Natural killer cell (primary cell): ENCODE measurements at regions of chr3 and their contacts with region 1.

Region 1: GRCh38 chr3:71006810-71007785 is 576.4 kb downstream of the FOXP1 start:
- DNase-seq: peak in 1 of 2 donors; percentile 63
- ATAC-seq: peak; percentile 61 to 76 (median 76)
- H3K4me3 ChIP-seq: no peak overlapping the region
- H3K4me3 Mint-ChIP-seq: no peak overlapping the region
- H3K27ac ChIP-seq: no peak overlapping the region
- H3K27ac Mint-ChIP-seq: peak overlapping the region; percentile 69 to 87
- H3K4me1 ChIP-seq: peaks cover 12% of the 10 kb centered on the region
- H3K4me1 Mint-ChIP-seq: peaks cover 52% of the 10 kb centered on the region in 2 donors
- H3K27me3 ChIP-seq: no peaks in the 10 kb centered on the region
- H3K27me3 Mint-ChIP-seq: no peaks in the 10 kb centered on the region
- CTCF ChIP-seq: peak; percentile 80

Region 2: GRCh38 chr3:71064288-71064955 is 57.3 kb after region 1 on chr3:
- intact Hi-C with region 1: loop called (anchors 1 kb)
- DNase-seq: peak; percentile 64 to 80
- ATAC-seq: peak; percentile 37 to 68 (median 55)
- H3K4me3 ChIP-seq: peak overlapping the region; percentile 55
- H3K4me3 Mint-ChIP-seq: no peak overlapping the region
- H3K27ac ChIP-seq: peak overlapping the region; percentile 82
- H3K27ac Mint-ChIP-seq: no peak overlapping the region
- H3K4me1 ChIP-seq: peaks cover 33% of the 10 kb centered on the region
- H3K4me1 Mint-ChIP-seq: peaks cover 35 to 38% of the 10 kb centered on the region in 2 donors
- H3K27me3 ChIP-seq: no peaks in the 10 kb centered on the region
- H3K27me3 Mint-ChIP-seq: no peaks in the 10 kb centered on the region
- CTCF ChIP-seq: no peak

Region 3: DNA sequence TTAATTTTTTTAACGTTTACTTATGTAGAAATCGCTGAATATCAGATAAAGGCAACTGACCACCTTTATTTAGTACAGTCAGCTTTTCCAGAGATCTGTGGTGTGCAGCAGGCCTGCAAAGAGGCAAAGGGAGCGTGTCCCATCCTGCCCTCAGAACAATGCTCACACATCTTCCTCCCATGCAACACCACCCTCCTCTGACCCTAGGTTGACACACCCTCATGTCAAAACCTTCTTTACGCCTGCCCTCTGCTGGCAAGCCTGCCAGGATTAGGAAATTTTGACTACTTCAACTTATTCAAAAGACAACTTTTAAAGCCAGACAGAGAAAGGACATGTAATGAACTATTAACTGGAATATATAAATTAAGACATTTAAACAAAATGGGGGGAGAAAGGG is 62.7 kb after region 1 on chr3:
- intact Hi-C with region 1: loop called (anchors 1 kb)
- DNase-seq: peak; percentile 51 to 82
- ATAC-seq: peak; percentile 17 to 38 (median 28)
- H3K4me3 ChIP-seq: no peak overlapping the region
- H3K4me3 Mint-ChIP-seq: peak overlapping the region; percentile 60
- H3K27ac ChIP-seq: no peak overlapping the region
- H3K27ac Mint-ChIP-seq: peak overlapping the region; percentile 51 to 65
- H3K4me1 ChIP-seq: peaks cover 51% of the 10 kb centered on the region
- H3K4me1 Mint-ChIP-seq: peaks cover 73 to 78% of the 10 kb centered on the region in 2 donors
- H3K27me3 ChIP-seq: no peaks in the 10 kb centered on the region
- H3K27me3 Mint-ChIP-seq: no peaks in the 10 kb centered on the region
- CTCF ChIP-seq: peak; percentile 42

Region 4: DNA sequence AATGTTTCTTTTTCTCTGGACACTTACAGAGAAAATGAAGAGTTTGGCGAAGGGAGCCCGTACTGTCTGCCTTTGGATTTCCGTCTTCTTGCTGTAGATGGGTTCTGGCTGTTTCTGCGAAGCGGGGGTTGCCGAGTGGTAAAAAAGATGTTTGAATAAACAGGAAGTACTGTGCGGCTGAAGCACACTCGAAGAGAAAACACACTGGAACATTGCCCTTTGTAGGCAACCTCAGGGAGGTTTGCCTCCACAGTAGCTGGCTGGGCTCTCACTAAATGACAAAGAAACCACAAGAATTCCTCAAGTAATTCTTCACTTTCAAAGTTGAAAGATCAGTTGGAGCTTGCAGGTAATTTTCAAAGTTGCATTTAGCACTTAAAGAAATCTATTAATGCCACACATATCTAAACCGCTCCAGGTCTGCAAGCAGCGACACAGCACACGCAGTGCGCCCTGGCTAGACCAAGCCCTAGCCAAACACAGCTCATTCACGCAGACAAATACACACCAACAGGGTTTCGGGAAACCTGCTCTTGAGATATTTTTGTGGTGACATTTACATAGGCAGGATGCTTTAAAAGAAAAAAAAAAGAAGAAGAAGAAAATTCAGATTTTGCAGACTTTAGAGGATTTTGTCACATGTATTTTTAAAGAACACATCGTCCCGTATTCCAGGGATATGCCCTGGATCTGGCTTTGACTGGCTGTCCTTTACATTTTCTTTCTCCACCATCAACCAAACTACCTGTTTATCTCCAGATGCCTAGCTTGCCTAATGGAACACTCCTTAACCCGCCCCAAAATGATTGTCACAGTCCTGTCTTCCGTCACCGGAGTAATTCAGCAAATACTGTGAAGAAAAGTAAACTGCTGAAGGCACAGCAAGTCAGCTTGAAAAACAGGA is 123.6 kb after region 1 on chr3:
- intact Hi-C with region 1: loop called (anchors 1 kb)
- DNase-seq: peak; percentile 62 to 88
- ATAC-seq: peak; percentile 74 to 87 (median 84)
- H3K4me3 ChIP-seq: peak overlapping the region; percentile 63
- H3K4me3 Mint-ChIP-seq: peak overlapping the region; percentile 95
- H3K27ac ChIP-seq: peak overlapping the region; percentile 86
- H3K27ac Mint-ChIP-seq: peak overlapping the region; percentile 93 to 98
- H3K4me1 ChIP-seq: peaks cover 18% of the 10 kb centered on the region
- H3K4me1 Mint-ChIP-seq: peaks cover 62 to 69% of the 10 kb centered on the region in 2 donors
- H3K27me3 ChIP-seq: no peaks in the 10 kb centered on the region
- H3K27me3 Mint-ChIP-seq: no peaks in the 10 kb centered on the region
- CTCF ChIP-seq: no peak

Region 5: DNA sequence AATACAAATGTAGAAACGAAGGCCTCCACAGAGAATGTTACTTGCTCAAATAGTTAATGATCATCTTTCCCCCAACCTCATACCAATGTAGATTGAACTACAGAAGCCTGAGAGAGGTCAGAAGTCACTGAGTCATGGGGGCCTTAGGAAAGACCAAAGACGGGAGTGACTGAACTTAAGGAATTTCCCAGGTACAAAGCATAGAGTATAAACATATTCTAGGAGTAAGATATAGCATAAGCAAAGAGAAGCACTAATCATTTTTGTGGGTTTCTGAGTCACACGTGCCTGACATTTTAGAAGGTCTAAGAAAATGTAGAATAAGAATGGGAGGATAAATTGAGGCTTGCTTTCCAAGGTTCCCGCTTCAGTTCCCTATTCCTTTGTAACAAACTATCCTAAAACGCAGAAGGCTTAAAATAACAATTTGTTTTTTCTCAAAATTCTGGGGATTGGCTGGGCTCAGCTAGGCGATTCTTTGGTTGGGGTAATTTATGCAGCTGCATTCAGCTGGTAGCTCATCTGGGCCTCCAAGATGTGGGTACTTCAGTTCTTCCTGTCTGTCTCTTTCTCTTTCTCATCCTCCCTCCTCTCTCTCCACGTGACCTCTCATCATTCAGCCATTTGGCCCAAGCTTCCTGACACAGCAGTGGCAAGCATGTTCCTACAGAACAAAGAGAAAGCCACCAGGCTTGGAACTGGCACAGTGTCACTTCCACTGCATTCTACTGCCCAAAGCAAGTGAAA is 153.9 kb after region 1 on chr3:
- intact Hi-C with region 1: no loop called
- DNase-seq: no peak
- ATAC-seq: no peak
- H3K4me3 ChIP-seq: no peak overlapping the region
- H3K4me3 Mint-ChIP-seq: no peak overlapping the region
- H3K27ac ChIP-seq: no peak overlapping the region
- H3K27ac Mint-ChIP-seq: no peak overlapping the region
- H3K4me1 ChIP-seq: no peaks in the 10 kb centered on the region
- H3K4me1 Mint-ChIP-seq: peaks cover 3 to 5% of the 10 kb centered on the region in 2 donors
- H3K27me3 ChIP-seq: no peaks in the 10 kb centered on the region
- H3K27me3 Mint-ChIP-seq: no peaks in the 10 kb centered on the region
- CTCF ChIP-seq: no peak

Region 6: DNA sequence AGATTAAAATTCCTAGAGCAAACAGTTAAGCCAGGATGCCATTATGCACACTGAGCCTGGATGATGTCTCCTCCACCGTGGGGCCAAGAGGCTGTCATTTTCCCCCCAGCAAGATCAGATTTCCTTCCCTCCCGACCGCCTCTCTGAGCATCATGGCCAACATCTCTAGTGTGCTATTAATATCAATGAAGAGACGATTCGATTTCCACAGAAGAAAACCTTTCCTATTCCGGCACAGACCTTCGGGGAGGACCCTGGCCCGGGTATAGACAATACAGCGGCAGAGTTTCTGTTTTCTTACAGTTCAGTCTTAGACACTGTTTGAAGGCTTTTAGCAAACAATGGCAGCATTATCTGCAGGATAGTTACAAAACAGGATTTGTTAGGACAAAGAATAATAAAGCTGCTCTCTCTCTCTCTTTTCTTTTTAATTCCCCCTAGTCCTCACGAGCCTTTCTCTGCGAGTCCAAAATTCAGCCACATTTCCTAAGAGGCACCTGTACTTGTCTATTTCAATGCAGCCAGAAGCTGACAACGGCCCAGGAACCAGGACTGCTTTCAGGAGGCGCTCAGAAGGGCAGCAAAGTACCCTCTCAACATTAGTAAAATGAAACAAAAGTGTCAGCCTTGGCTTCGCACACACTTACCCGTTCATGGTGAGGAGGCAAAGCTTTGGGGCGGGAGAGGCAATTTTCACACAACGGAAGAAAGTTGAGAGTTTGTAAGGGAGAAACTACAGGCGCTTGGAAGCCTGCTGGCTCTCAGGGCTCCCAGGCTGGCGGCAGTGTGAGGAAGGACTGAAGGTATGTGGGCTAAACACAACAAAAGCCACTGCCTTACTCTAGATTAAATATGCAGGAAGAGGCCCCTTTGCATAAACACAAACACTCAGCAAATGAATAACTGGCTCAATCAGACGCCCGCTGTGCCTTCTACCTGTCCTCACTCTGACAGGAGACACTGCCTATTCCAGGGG is 298.4 kb after region 1 on chr3:
- intact Hi-C with region 1: loop called (anchors 5 kb)
- DNase-seq: peak in 1 of 2 donors; percentile 45
- ATAC-seq: peak; percentile 64 to 74 (median 64)
- H3K4me3 ChIP-seq: peak overlapping the region; percentile 41
- H3K4me3 Mint-ChIP-seq: peak overlapping the region; percentile 93
- H3K27ac ChIP-seq: peak overlapping the region; percentile 57
- H3K27ac Mint-ChIP-seq: peak overlapping the region; percentile 80 to 93
- H3K4me1 ChIP-seq: peaks cover 14% of the 10 kb centered on the region
- H3K4me1 Mint-ChIP-seq: peaks cover 58 to 60% of the 10 kb centered on the region in 2 donors
- H3K27me3 ChIP-seq: no peaks in the 10 kb centered on the region
- H3K27me3 Mint-ChIP-seq: no peaks in the 10 kb centered on the region
- CTCF ChIP-seq: no peak

Region 7: DNA sequence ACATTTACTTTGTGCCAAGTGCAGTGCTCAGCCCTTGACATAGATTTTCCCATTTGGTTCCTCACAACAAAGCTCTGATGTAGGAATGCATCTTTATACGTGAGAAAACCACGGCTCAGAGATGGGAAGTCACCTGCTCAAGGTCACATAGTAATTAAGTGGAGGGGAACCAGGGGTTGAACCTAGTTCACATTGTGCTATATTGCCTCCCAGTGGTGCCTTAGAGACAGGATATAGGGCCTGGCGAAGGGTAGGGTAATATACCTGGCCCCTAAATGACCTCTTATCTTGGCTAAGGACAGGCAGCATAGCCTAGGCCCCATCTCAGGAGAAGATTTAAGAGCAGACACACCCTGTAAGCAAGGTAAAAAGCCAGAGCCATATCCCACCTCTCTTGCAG is 504.9 kb after region 1 on chr3:
- intact Hi-C with region 1: loop called (anchors 5 kb)
- DNase-seq: peak in 1 of 2 donors; percentile 85
- ATAC-seq: peak; percentile 78 to 85 (median 83)
- H3K4me3 ChIP-seq: no peak overlapping the region
- H3K4me3 Mint-ChIP-seq: no peak overlapping the region
- H3K27ac ChIP-seq: no peak overlapping the region
- H3K27ac Mint-ChIP-seq: peak overlapping the region in 1 of 2 donors; percentile 63
- H3K4me1 ChIP-seq: peaks cover 18% of the 10 kb centered on the region
- H3K4me1 Mint-ChIP-seq: peaks cover 0 to 15% of the 10 kb centered on the region in 2 donors
- H3K27me3 ChIP-seq: no peaks in the 10 kb centered on the region
- H3K27me3 Mint-ChIP-seq: no peaks in the 10 kb centered on the region
- CTCF ChIP-seq: peak; percentile 40